ENCODE measurements at regions of chr5 and their contacts with region 1.

Region 1: GRCh38 chr5:119267958-119268386 is 87.8 kb upstream of the TNFAIP8 start:
- DNase-seq: peak; percentile 80 to 98
- H3K4me3 ChIP-seq: peak overlapping the region; percentile 84 to 87
- H3K27ac ChIP-seq: peak overlapping the region; percentile 93 to 96
- H3K4me1 ChIP-seq: peaks cover 0 to 15% of the 10 kb centered on the region in 2 donors
- H3K27me3 ChIP-seq: no peaks in the 10 kb centered on the region
- CTCF ChIP-seq: peak in 2 of 3 experiments; percentile 42 to 68

Region 2: GRCh38 chr5:118987988-118988865 is 279.7 kb before region 1 on chr5 and contains the start of gene DTWD2:
- intact Hi-C with region 1: loop called (anchors 2 kb)
- DNase-seq: peak; percentile 54 to 96
- H3K4me3 ChIP-seq: peak within 1 kb of the TSS; percentile 76 to 99
- H3K27ac ChIP-seq: peak within 1 kb of the TSS; percentile 89 to 91
- H3K4me1 ChIP-seq: peaks cover 4 to 9% of the 10 kb centered on the region in 2 donors
- H3K27me3 ChIP-seq: no peaks in the 10 kb centered on the region
- CTCF ChIP-seq: peak; percentile 81 to 91 (median 84)
- total RNA-seq, gene DTWD2: 0.11 TPM

Region 3: GRCh38 chr5:119290161-119290569 is 22.2 kb after region 1 on chr5:
- intact Hi-C with region 1: loop called (anchors 2 kb)
- DNase-seq: no peak
- H3K4me3 ChIP-seq: no peak overlapping the region
- H3K27ac ChIP-seq: peak overlapping the region; percentile 75 to 83
- H3K4me1 ChIP-seq: peaks cover 12 to 52% of the 10 kb centered on the region in 2 donors
- H3K27me3 ChIP-seq: no peaks in the 10 kb centered on the region
- CTCF ChIP-seq: no peak

Region 4: GRCh38 chr5:119322948-119323537 is 55.1 kb after region 1 on chr5:
- intact Hi-C with region 1: loop called (anchors 1 kb)
- DNase-seq: no peak
- H3K4me3 ChIP-seq: no peak overlapping the region
- H3K27ac ChIP-seq: peak overlapping the region; percentile 80 to 82
- H3K4me1 ChIP-seq: peaks cover 4 to 13% of the 10 kb centered on the region in 2 donors
- H3K27me3 ChIP-seq: no peaks in the 10 kb centered on the region
- CTCF ChIP-seq: no peak

Region 5: DNA sequence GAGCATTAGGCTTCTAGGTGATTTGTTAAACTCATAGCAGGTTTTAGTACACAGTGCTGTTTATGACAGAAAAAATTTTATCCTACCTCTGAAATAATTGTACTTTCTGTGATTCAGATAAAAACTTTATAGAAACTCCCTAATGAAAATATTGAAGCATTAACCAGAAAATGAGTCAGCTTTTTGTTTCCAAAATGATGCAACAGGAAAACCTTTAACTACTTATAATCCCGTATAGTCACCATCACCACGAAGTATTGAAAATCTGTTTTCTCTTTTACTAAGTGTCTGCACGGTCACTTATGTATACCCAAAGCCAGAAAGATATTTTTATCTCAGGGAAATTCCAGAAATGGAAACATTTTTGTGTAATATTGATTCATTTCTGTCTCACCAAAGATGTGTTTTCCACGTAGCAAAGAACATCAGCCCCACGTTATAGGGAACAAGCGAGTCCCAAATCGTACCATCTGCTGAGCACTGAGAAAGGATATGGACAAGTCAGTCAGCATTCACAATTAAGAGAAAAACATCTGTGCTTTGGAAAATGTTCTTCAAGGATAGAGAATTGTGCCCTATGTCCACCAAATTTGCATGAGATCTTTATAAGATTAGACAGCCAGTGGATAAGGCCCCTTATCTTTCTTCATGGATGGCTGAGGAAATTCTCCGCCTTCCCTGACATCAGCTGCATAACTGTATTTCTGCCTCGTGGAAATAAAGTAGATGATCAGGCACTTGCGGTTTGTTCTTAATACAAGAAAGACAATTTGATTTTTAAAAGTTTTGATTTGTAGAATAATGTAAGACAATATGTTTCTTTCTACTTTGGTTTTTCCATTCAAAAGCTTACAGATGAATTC is 129.8 kb after region 1 on chr5:
- intact Hi-C with region 1: loop called (anchors 1 kb)
- DNase-seq: no peak
- H3K4me3 ChIP-seq: peak overlapping the region in 1 of 2 donors; percentile 18
- H3K27ac ChIP-seq: no peak overlapping the region
- H3K4me1 ChIP-seq: peaks cover 0 to 14% of the 10 kb centered on the region in 2 donors
- H3K27me3 ChIP-seq: no peaks in the 10 kb centered on the region
- CTCF ChIP-seq: no peak

Region 6: GRCh38 chr5:120258123-120258522 is 990.2 kb after region 1 on chr5:
- intact Hi-C with region 1: no loop called
- DNase-seq: no peak
- H3K4me3 ChIP-seq: no peak overlapping the region
- H3K27ac ChIP-seq: no peak overlapping the region
- H3K4me1 ChIP-seq: no peaks in the 10 kb centered on the region
- H3K27me3 ChIP-seq: no peaks in the 10 kb centered on the region
- CTCF ChIP-seq: no peak

Measured in ascending aorta (tissue), 2 donors.